ENCODE measurements at regions of chr3 and their contacts with region 1.

Region 1: DNA sequence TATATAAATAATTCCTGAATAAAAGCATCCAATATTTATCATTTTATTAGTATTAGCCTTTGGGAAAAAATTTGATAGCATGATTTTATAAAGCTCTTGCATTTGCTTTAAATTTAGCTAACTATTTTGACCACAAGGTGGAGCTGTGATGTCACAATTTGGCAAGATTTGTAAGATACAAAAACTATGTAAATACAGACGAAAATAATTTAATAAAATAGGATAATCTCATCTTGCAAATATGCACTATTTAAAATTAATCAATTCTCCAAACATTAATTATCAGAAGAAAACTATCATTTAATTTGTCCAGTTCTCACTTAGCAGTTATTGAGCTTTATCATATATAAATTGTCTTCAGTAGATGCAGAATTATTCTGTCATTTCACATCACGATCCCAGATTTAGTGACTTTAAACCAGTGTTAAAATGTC is 95.4 kb downstream of the PLOD2 start:
- DNase-seq: no peak
- ATAC-seq: no peak

Region 2: DNA sequence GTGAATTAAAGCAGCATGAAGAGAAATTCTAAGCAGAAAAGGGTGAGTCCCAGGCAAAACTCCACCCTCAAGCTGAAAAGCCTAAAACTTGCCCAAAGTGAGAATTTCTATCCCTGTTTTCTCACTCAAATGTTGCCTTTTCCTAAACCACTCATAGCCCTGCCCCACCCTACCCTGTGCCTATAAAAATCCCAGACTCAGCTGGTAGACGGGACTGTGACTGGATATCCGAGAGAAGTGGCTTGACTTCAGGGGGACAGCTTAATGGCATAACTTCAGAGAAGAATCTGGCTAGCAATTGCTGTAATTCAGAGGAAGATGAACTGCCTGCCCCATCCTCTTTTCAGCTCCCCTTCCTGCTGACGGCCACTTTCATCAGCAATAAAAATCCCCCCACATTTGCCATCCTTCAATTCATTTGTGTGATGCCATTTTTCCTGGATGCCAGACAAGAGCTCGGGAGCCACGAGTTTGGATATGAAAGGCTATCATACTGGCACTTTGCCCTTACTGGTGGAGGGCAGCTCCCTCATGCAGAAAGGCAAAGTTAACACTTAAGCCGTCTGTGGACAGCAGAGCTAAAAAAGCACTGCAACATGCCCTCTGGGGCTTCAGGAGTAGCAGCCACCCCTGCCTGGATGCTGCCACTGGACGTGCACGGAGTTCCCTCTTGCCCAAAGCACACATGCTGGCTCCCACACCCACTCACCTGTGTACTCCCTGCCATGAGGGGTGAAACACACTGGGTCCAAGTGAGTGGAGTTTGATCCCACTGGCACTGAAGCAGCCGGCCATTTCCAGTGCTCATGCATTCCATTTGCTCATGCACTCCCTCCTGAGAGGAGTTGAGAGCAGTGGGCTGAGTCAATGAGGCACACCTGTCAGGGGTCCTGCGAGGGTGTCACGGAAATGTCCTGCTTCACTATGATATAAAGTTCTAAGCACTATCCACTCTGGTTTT is 575.2 kb before region 1 on chr3:
- intact Hi-C with region 1: no loop called
- DNase-seq: no peak
- ATAC-seq: peak; percentile 91

Region 3: GRCh38 chr3:145889730-145890129 is 175.9 kb before region 1 on chr3:
- intact Hi-C with region 1: no loop called
- DNase-seq: no peak
- ATAC-seq: no peak

Region 4: DNA sequence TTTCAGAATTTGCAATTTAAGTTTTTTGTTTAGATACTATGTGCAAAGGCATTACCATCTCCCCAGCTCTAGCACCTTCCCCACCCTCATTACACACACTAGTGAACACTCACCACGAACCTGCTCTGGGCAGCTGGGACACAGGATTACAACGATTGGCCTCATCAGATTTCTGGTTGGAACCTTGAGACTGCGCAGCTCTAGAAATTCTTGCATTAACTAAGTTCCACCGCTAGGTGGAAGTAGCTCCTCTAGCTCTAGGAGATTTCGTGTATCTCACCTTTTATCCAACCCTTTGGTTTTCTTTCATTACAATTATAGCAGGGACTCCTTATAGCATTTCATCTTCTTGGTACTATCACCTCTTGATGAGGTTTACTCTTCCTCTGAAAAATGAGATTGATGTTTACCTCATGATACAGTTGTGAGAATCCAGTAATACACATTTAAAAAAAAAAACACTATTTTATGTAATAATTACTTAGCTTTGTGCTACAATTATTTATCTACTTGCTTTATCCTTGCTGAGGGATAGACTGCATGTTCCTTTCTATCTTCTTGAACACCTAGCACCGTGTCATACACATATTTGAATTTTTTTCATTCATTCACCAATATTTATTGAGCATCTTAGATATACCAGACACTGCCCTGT is 124.1 kb after region 1 on chr3:
- intact Hi-C with region 1: loop called (anchors 5 kb)
- DNase-seq: no peak
- ATAC-seq: peak; percentile 74

Region 5: DNA sequence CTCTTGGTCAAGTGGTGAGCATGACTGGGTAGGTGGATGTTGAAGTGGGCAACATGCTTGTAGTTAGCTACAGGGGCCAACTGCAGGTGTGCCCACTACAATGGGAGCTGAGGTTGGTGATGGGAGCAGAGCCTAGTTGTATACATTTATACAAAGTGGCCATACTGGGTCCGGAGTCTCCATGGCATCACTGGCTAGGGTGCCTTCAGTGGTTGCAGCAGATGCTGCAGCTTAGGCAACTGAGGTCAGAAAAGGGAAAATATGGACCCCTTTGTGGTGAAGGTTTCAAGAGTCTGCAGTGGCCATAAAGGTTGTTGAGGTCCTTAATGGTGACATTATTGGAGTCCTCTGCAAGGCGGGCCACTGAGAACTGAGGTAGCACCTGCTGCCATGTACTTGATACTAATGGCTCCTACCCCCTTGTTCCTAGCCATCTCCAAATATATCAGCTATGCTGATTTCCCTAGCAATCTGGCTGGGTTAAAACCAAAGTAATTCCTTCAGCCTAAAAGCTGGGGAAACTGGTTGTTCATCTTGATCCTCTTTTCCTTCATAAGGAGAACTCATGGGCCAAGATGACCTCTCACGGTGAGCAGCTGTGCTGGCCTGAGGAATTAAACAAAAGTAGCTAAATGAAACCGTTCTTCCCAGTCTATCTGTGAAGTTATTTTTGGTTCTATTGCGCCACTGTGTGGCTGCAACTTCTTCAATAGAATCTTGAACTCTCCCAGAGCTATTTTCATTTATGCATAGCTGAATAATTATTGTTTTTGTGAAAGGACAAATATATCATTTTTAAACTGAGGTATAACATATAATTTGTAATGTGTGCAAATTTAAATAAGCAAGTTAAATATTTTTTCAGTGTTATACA is 261.3 kb after region 1 on chr3:
- intact Hi-C with region 1: loop called (anchors 5 kb)
- DNase-seq: no peak
- ATAC-seq: peak; percentile 74